Psoas muscle (tissue), 8 donors: ENCODE measurements at regions of chr7 and their contacts with region 1.

Region 1: GRCh38 chr7:98021588-98022351 is 31.8 kb upstream of the OCM2 start:
- DNase-seq: peak; percentile 65 to 83
- ATAC-seq: peak; percentile 61 to 88 (median 68)
- H3K4me3 ChIP-seq: no peak overlapping the region
- H3K27ac ChIP-seq: no peak overlapping the region
- H3K4me1 ChIP-seq: no peaks in the 10 kb centered on the region
- H3K27me3 ChIP-seq: no peaks in the 10 kb centered on the region
- CTCF ChIP-seq: peak; percentile 82

Region 2: GRCh38 chr7:98106647-98107445 is 85.1 kb after region 1 on chr7 and contains the start of gene LMTK2:
- intact Hi-C with region 1: loop called in 1 of 2 experiments (anchors 10 kb)
- DNase-seq: peak; percentile 96 to 98
- ATAC-seq: peak; percentile 100
- H3K4me3 ChIP-seq: peak within 1 kb of the TSS; percentile 96
- H3K27ac ChIP-seq: peak within 1 kb of the TSS; percentile 92
- H3K4me1 ChIP-seq: peaks cover 16% of the 10 kb centered on the region
- H3K27me3 ChIP-seq: peaks cover 0 to 1% (median 0%) of the 10 kb centered on the region in 3 donors
- CTCF ChIP-seq: peak; percentile 95
- total RNA-seq, gene LMTK2: 12.7 to 25.0 (median 16.1) TPM